ENCODE measurements at regions of chr12 and their contacts with region 1.

Region 1: DNA sequence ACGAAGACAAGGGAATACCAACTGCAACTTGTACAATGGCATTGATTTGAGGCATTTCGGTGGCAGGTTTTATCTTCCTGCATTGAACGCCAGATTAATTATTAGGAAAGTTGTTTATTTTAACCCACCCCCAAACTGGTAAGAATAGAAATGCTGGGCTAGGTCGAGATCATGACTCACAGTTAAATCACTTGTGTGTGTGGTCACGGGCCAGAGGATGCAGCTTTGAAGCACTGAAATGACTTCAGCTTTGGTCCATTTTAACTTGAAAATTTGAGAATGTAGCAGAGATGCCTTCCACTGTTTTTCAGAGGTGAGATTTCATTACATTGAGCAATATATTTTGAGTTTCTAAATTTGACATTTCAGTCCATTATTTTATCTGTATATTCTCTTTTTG is 23.6 kb upstream of the KCNH3 start:
- DNase-seq: no peak
- ATAC-seq: no peak
- H3K4me3 ChIP-seq: no peak overlapping the region
- H3K27ac ChIP-seq: no peak overlapping the region
- H3K4me1 ChIP-seq: no peaks in the 10 kb centered on the region
- H3K27me3 ChIP-seq: no peaks in the 10 kb centered on the region
- CTCF ChIP-seq: no peak
- EP300 ChIP-seq: no peak
- POLR2A ChIP-seq: no peak
- RAD21 ChIP-seq: no peak

Region 2: DNA sequence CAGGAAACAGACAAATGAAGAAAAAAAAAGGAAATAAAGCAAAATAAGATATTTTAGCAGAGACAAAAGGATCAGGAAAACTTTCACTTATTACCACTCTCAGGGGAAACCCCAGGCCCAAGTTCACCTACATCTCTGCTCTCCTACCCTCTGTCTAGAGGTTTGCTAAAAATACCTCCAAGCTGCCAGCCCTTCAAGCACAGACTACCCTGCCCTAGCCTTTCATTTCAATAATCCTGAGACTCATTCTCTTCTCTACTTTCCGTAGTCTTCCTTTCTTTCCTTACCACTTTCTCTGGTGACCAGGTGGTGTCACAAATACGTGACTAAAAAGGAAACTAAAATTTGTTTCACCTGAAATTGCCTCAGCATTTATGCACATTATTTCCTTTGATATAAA is 1843.2 kb before region 1 on chr12:
- CTCF ChIA-PET with region 1: no interaction called
- POLR2A ChIA-PET with region 1: no interaction called
- in situ Hi-C with region 1: no loop called
- intact Hi-C with region 1: no loop called
- DNase-seq: no peak
- ATAC-seq: no peak
- H3K4me3 ChIP-seq: no peak overlapping the region
- H3K27ac ChIP-seq: no peak overlapping the region
- H3K4me1 ChIP-seq: no peaks in the 10 kb centered on the region
- H3K27me3 ChIP-seq: no peaks in the 10 kb centered on the region
- CTCF ChIP-seq: no peak
- EP300 ChIP-seq: no peak
- POLR2A ChIP-seq: no peak
- RAD21 ChIP-seq: no peak

Region 3: GRCh38 chr12:49580572-49581535 is 65.6 kb after region 1 on chr12:
- CTCF ChIA-PET with region 1: interaction called, 3 read pairs
- POLR2A ChIA-PET with region 1: no interaction called
- in situ Hi-C with region 1: no loop called
- intact Hi-C with region 1: loop called (anchors 1 kb)
- DNase-seq: peak; percentile 71 to 82 (median 74)
- ATAC-seq: peak; percentile 98
- H3K4me3 ChIP-seq: no peak overlapping the region
- H3K27ac ChIP-seq: no peak overlapping the region
- H3K4me1 ChIP-seq: peaks cover 5 to 20% of the 10 kb centered on the region in 2 experiments; a peak in 4 of 5 replicates
- H3K27me3 ChIP-seq: no peaks in the 10 kb centered on the region
- CTCF ChIP-seq: peak; percentile 84 to 93 (median 92)
- EP300 ChIP-seq: no peak
- POLR2A ChIP-seq: no peak
- RAD21 ChIP-seq: peak; percentile 63 to 86